IMR-90 (cell line): ENCODE measurements at regions of chr9 and their contacts with region 1.

Region 1: DNA sequence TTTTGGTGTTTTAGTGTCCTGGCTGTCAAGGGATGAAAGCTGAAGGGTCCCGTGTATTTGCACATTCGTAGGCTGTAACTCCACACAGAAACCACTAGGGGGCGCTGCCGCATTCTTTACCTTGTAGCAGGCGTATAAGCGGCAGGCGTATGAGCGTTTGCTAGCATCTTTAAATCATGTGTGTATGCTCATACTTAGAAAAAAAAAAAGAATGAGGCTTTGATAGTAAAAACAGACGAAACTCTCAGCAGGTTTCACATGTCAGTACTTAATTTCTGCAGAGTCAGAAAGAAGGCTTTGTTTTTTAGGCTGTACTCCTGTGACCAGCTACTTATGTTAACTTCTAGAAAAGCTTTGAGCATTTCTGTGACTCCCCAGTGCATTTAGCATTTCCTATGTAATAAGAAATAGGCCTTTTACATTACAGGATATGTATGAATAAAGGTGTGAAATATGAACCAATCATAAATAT is 218.8 kb upstream of the ADAMTSL1 start:
- DNase-seq: peak; percentile 87
- ATAC-seq: peak; percentile 97
- H3K4me3 ChIP-seq: no peak overlapping the region
- H3K27ac ChIP-seq: no peak overlapping the region
- H3K4me1 ChIP-seq: no peaks in the 10 kb centered on the region
- H3K27me3 ChIP-seq: no peaks in the 10 kb centered on the region
- CTCF ChIP-seq: peak; percentile 93
- POLR2A ChIP-seq: peak; percentile 55; the same call in 1 of the 2 replicates
- RAD21 ChIP-seq: peak; percentile 97

Region 2: DNA sequence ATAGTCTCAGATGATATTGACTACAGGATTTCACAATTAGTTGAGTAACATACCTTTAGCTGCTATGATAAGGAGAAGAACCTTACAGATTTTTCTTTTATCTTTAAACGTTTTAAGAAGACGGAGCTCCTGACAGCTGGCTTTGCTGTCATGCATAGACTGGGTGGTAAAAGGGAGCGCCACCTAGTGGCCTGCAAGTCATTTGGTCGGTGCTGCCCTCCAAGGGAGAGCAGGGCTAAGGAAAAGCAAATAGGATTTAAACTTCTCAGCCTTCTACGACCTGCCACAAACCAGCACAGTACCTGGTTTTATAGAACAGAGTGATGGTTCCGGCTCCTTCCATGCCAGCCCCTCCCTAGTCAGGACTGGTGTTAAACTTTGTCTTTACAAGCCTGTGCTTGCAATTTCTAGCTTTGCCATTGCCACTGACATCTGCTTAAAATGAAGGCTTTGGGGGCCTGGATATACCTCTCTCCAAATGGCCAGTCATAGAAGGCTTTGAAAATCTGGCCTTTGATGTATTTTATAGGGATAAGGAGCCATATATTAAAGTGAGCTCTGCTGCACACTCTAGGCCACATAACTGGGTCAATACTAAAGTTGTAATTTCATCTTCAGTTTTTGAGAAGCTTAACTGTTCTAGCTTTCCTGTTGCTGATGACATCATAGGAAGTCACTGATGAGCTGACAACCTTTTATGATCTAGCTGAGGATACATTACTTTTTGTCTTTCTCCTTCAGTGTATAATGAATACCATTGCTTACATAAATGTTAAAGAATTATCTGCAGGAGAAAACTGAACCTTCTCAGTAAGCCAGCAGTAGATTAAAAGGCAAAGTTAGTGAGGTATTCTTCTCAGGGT is 187.7 kb after region 1 on chr9:
- CTCF ChIA-PET with region 1: interaction called, 20 read pairs
- POLR2A ChIA-PET with region 1: no interaction called
- dilution Hi-C with region 1: no loop called
- in situ Hi-C with region 1: loop called (anchors 10 kb)
- intact Hi-C with region 1: loop called (anchors 1 kb)
- DNase-seq: peak; percentile 87
- ATAC-seq: peak; percentile 71
- H3K4me3 ChIP-seq: no peak overlapping the region
- H3K27ac ChIP-seq: no peak overlapping the region
- H3K4me1 ChIP-seq: peaks cover 10% of the 10 kb centered on the region
- H3K27me3 ChIP-seq: no peaks in the 10 kb centered on the region
- CTCF ChIP-seq: peak; percentile 92
- POLR2A ChIP-seq: no peak
- RAD21 ChIP-seq: peak; percentile 79

Region 3: DNA sequence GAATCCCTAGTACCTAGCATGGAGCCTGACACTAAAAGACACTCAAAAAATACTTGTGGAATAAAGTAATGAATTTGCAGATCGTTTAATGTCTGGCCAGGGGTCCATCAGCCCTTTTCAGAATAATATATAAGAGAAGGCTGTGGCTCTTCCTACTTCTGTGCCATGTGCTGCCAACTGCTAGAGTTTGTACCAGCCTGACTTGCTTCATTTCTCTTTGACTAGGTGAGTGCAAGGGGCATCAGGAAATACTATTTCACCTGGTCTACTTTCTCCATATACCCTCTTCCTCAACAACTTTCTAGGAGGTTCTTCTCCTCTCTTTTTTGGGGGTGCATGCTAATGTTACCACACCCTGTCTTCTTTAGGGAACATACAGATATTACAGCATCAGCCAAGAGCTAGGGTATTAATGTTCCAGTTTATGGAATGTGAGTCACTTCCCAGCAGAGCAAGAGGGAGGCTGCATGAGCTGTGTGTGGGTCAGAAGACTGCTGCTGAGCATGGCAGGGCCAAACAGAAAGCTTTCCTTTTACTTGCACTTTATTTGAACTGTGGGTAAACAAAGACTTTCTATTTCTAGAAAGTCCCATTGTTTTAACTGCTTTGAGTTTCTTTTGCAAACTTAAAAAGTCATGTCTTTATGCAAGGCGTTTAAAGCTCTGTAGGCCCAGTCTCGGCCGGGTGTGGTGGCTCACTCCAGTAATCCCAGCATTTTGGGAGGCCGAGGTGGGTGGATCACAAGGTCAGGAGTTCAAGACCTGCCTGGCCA is 377.6 kb after region 1 on chr9:
- CTCF ChIA-PET with region 1: no interaction called
- POLR2A ChIA-PET with region 1: no interaction called
- dilution Hi-C with region 1: no loop called
- in situ Hi-C with region 1: no loop called
- intact Hi-C with region 1: loop called (anchors 10 kb)
- DNase-seq: peak; percentile 90
- ATAC-seq: peak; percentile 100
- H3K4me3 ChIP-seq: no peak overlapping the region
- H3K27ac ChIP-seq: no peak overlapping the region
- H3K4me1 ChIP-seq: peaks cover under 1% of the 10 kb centered on the region; the same call in 1 of the 2 replicates
- H3K27me3 ChIP-seq: no peaks in the 10 kb centered on the region
- CTCF ChIP-seq: no peak
- POLR2A ChIP-seq: no peak
- RAD21 ChIP-seq: no peak

Region 4: GRCh38 chr9:19018201-19018600 is 763.0 kb after region 1 on chr9:
- CTCF ChIA-PET with region 1: interaction called, 6 read pairs
- POLR2A ChIA-PET with region 1: no interaction called
- dilution Hi-C with region 1: no loop called
- in situ Hi-C with region 1: no loop called
- intact Hi-C with region 1: loop called (anchors 1 kb)
- DNase-seq: no peak
- ATAC-seq: no peak
- H3K4me3 ChIP-seq: no peak overlapping the region
- H3K27ac ChIP-seq: no peak overlapping the region
- H3K4me1 ChIP-seq: no peaks in the 10 kb centered on the region
- H3K27me3 ChIP-seq: peaks cover 9% of the 10 kb centered on the region
- CTCF ChIP-seq: no peak
- POLR2A ChIP-seq: no peak
- RAD21 ChIP-seq: no peak

Region 5: GRCh38 chr9:19174127-19174912 is 919.1 kb after region 1 on chr9:
- CTCF ChIA-PET with region 1: no interaction called
- POLR2A ChIA-PET with region 1: no interaction called
- dilution Hi-C with region 1: no loop called
- in situ Hi-C with region 1: loop called (anchors 25 kb)
- intact Hi-C with region 1: loop called (anchors 10 kb)
- DNase-seq: peak; percentile 93
- ATAC-seq: peak; percentile 97
- H3K4me3 ChIP-seq: no peak overlapping the region
- H3K27ac ChIP-seq: no peak overlapping the region
- H3K4me1 ChIP-seq: no peaks in the 10 kb centered on the region
- H3K27me3 ChIP-seq: no peaks in the 10 kb centered on the region
- CTCF ChIP-seq: peak; percentile 78
- POLR2A ChIP-seq: no peak
- RAD21 ChIP-seq: peak; percentile 84